Vagina (tissue), 2 donors: ENCODE measurements at regions of chr2 and their contacts with region 1.

Region 1: DNA sequence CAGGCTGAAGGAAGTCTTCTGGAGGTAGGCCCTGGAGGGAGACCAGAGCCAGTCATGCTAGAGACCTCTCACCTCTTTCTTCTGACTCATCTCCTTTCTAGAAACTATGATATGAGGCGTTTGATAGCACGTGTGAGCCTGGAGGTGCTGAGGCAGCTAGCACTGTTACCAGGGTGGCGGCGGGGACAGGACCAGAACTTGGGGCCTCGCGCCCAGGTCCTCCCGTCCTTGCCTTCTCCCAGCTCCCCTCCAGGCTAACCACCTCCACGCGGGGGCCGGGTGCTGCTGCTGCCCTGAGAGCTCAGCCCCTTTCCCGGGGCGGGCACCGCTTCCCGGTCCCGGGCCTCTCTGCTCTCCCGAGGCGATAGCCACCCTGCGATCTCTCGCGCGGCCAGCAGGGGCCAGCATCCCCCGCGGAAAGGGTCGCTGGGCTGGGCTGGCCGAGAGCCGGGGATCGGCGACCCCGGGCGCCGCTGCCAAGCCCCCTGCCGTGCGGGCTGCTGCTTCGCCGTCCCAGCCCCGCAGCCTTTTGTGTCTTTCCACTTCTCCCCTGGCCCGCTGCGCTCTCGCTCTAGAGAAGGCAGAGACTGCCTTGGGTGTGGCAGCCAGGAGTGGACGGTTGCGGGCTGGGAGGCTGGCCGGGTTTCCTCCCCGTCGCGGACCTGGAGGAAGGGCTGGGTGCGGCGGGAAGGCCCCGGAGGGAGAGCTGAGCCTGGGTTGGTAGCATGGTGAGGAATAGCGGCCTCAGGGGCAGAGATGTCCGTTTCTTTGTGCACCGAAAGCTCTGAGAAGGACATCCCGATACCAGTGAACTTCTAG is 49.1 kb downstream of the TMEM17 start:
- DNase-seq: no peak
- H3K4me3 ChIP-seq: peak overlapping the region; percentile 53 to 65
- H3K27ac ChIP-seq: peak overlapping the region; percentile 79
- H3K4me1 ChIP-seq: peaks cover 33% of the 10 kb centered on the region
- H3K27me3 ChIP-seq: no peaks in the 10 kb centered on the region
- CTCF ChIP-seq: peak; percentile 56 to 99 (median 98)
- POLR2A ChIP-seq: no peak

Region 2: GRCh38 chr2:62774555-62775366 is 317.8 kb after region 1 on chr2:
- intact Hi-C with region 1: loop called (anchors 1 kb)
- DNase-seq: no peak
- H3K4me3 ChIP-seq: no peak overlapping the region
- H3K27ac ChIP-seq: no peak overlapping the region
- H3K4me1 ChIP-seq: no peaks in the 10 kb centered on the region
- H3K27me3 ChIP-seq: no peaks in the 10 kb centered on the region
- CTCF ChIP-seq: peak in 2 of 3 experiments; percentile 47 to 59
- POLR2A ChIP-seq: no peak

Region 3: DNA sequence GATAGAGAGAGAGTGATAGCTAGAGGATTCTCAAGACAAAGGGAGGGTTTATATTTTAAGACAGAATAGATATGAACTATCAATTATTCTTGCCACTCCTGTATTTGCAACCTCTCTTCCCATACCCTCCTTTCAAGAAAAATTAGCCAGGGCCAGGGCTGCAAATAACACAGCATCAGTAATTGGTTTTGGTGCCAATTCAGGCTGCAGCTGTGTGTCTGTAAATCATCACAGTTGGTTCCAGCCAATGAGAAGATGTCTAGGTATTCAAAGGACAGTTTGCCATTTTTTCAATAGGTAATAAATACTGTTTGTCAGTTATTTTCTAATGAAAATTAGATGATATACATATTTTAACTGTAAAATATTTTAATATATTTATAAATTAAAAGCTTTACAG is 1057.9 kb after region 1 on chr2:
- intact Hi-C with region 1: no loop called
- DNase-seq: no peak
- H3K4me3 ChIP-seq: no peak overlapping the region
- H3K27ac ChIP-seq: no peak overlapping the region
- H3K4me1 ChIP-seq: no peaks in the 10 kb centered on the region
- H3K27me3 ChIP-seq: no peaks in the 10 kb centered on the region
- CTCF ChIP-seq: no peak
- POLR2A ChIP-seq: no peak